Activated CD8-positive, alpha-beta T cell treated with anti-CD3 and anti-CD28 coated beads for 36 hours (primary cell): ENCODE measurements at regions of chr11 and their contacts with region 1.

Region 1: DNA sequence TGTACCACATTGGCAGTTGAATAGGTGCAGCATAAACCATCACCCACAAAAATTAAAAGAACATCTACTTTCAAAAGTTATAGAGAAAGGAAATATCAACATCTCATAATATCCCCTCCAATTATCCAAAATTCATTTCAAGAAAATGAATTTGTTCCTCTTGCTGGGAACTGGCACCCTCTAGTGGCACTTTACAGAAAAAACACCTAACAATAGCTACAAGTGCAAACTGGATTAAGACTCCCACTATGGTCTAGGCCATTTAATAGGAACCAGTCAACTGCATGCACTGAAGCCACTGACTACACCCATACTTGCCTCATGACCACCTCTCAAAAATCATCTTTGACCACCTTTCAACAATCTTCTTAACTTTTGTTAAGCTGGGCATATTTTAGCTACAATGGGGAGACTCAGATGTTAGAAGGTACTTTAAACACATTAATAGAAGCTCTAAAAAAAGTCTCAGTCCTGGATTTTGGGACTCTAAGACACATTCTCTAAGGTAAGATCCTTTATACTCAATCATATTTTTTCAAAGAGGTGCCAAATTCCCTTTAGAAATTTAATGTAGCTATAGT is 17.3 kb downstream of the TRAF6 start:
- DNase-seq: peak; percentile 45
- ATAC-seq: peak; percentile 74
- H3K4me3 Mint-ChIP-seq: no peak overlapping the region
- H3K27ac Mint-ChIP-seq: no peak overlapping the region
- H3K4me1 Mint-ChIP-seq: peaks cover 13% of the 10 kb centered on the region
- H3K27me3 Mint-ChIP-seq: no peaks in the 10 kb centered on the region
- CTCF ChIP-seq: peak; percentile 86

Region 2: GRCh38 chr11:36265793-36266628 is 226.8 kb before region 1 on chr11:
- CTCF ChIA-PET with region 1: interaction called, 12 read pairs
- POLR2A ChIA-PET with region 1: no interaction called
- intact Hi-C with region 1: no loop called
- DNase-seq: peak; percentile 66
- ATAC-seq: peak; percentile 77
- H3K4me3 Mint-ChIP-seq: no peak overlapping the region
- H3K27ac Mint-ChIP-seq: no peak overlapping the region
- H3K4me1 Mint-ChIP-seq: no peaks in the 10 kb centered on the region
- H3K27me3 Mint-ChIP-seq: peaks cover 2% of the 10 kb centered on the region
- CTCF ChIP-seq: peak; percentile 91

Region 3: GRCh38 chr11:36300651-36301050 is 192.2 kb before region 1 on chr11:
- CTCF ChIA-PET with region 1: interaction called, 163 read pairs
- POLR2A ChIA-PET with region 1: no interaction called
- intact Hi-C with region 1: no loop called
- DNase-seq: no peak
- ATAC-seq: no peak
- H3K4me3 Mint-ChIP-seq: no peak overlapping the region
- H3K27ac Mint-ChIP-seq: no peak overlapping the region
- H3K4me1 Mint-ChIP-seq: no peaks in the 10 kb centered on the region
- H3K27me3 Mint-ChIP-seq: peaks cover 4% of the 10 kb centered on the region
- CTCF ChIP-seq: no peak

Region 4: GRCh38 chr11:36326524-36327419 is 166.0 kb before region 1 on chr11:
- CTCF ChIA-PET with region 1: interaction called, 12 read pairs
- POLR2A ChIA-PET with region 1: no interaction called
- intact Hi-C with region 1: no loop called
- DNase-seq: no peak
- ATAC-seq: peak; percentile 65
- H3K4me3 Mint-ChIP-seq: no peak overlapping the region
- H3K27ac Mint-ChIP-seq: no peak overlapping the region
- H3K4me1 Mint-ChIP-seq: peaks cover 9% of the 10 kb centered on the region
- H3K27me3 Mint-ChIP-seq: peaks cover 8% of the 10 kb centered on the region
- CTCF ChIP-seq: no peak

Region 5: DNA sequence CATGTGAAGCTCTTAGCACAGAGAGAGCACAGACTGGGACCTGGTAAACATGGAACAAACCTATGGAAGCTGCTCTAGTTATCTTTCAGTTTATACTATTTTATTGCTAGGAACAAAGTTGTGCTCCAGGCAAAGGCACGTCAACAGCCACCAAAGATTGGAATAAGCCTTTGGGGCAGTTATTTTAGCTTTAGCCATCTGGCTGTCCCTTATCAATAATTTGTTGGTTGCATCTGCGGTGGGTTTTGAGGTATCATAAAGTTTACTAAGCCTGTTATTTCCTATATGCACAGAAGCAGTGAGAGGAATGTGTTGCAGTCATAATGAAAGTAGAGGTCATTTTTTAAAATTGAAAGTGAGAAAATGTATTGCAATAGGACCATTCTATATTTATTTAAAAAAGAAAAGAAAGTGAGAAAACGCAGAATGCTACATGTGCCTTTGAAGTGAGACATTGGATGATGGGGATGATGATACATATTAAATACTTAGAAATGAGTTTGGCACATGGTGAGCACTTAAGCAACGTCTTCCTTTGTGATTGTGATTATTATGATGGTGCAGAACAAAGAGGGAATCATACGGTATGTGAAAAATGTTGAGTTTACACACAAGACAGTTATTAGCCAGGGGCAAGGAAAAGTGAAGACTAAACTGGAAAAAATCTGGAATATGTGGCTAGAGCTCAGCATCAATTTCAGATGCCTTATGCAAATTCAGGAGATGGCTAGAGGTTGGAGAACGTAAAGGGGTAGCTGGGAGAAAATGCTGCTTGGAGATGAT is 138.4 kb before region 1 on chr11:
- CTCF ChIA-PET with region 1: interaction called, 13 read pairs
- POLR2A ChIA-PET with region 1: no interaction called
- intact Hi-C with region 1: no loop called
- DNase-seq: no peak
- ATAC-seq: peak; percentile 67
- H3K4me3 Mint-ChIP-seq: no peak overlapping the region
- H3K27ac Mint-ChIP-seq: no peak overlapping the region
- H3K4me1 Mint-ChIP-seq: peaks cover 52% of the 10 kb centered on the region
- H3K27me3 Mint-ChIP-seq: peaks cover 30% of the 10 kb centered on the region
- CTCF ChIP-seq: no peak

Region 6: DNA sequence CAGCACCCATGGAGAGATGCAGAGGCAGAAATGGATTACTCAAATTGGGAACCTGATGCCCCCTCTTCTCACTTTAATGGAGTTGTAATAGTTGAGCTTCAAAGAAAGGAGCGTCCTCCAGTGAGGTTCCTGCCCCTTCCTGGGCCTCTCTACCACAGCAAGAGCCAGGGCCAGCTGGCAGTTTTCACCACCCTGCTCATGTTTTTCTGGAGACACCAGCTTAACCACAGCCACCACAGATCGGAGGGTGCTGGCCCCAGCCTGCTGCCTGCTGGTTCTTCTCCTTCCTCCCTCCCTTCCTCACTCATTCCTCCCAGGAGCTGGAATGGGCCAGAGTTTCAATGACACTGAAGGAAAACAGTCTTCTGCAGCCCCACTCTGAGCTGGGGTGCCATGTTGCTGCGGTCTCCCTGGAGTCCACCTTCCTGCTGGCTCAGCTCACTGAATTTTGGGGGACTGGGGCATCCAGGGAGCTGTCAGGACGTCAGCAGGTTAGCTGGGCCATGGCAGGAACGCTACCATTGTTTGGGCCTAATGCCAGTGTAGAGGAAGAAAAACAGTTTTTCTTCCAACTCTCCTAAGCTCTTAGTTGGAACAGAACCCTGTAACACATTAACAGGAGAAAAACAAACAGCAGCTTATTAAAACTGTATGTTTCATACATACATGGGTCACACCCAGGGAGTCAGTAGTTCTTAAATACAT is 40.4 kb before region 1 on chr11:
- CTCF ChIA-PET with region 1: interaction called, 15 read pairs
- POLR2A ChIA-PET with region 1: no interaction called
- intact Hi-C with region 1: no loop called
- DNase-seq: peak; percentile 49
- ATAC-seq: peak; percentile 43
- H3K4me3 Mint-ChIP-seq: no peak overlapping the region
- H3K27ac Mint-ChIP-seq: no peak overlapping the region
- H3K4me1 Mint-ChIP-seq: peaks cover 33% of the 10 kb centered on the region
- H3K27me3 Mint-ChIP-seq: no peaks in the 10 kb centered on the region
- CTCF ChIP-seq: no peak

Region 7: DNA sequence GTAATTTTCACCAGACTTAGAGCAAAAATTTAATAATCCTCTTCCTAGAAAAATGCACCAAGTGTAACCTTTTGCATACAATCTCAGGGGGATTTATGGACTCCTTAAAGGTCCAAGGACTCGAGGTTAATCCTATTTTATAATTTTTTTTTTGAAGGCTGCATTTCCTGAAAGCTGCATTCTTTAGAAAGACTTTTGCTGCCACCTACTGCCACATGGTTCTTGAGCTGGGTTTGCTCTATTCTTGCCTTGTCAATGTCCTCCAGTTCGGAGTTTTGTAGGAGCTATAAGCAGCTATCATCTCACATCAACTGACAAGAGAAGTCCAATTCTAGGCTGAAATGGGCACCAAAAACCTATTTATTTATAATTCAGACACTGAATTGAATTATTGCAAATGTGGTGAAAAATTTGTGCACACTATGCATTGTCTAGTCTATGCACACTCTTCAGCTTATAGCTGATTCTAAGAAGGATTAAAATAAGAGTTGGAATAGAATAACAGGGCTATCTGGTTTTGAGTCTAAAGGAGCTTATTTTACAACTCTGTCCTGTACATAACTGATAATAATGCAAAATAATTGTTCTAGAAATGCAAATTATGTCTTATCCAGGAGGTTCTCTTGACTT is 14.0 kb before region 1 on chr11:
- CTCF ChIA-PET with region 1: interaction called, 55 read pairs
- POLR2A ChIA-PET with region 1: interaction called, 4 read pairs
- intact Hi-C with region 1: no loop called
- DNase-seq: peak; percentile 60
- ATAC-seq: peak; percentile 37
- H3K4me3 Mint-ChIP-seq: no peak overlapping the region
- H3K27ac Mint-ChIP-seq: no peak overlapping the region
- H3K4me1 Mint-ChIP-seq: peaks cover 4% of the 10 kb centered on the region
- H3K27me3 Mint-ChIP-seq: no peaks in the 10 kb centered on the region
- CTCF ChIP-seq: peak; percentile 51